ENCODE measurements at regions of chr3 and their contacts with region 1.

Region 1: DNA sequence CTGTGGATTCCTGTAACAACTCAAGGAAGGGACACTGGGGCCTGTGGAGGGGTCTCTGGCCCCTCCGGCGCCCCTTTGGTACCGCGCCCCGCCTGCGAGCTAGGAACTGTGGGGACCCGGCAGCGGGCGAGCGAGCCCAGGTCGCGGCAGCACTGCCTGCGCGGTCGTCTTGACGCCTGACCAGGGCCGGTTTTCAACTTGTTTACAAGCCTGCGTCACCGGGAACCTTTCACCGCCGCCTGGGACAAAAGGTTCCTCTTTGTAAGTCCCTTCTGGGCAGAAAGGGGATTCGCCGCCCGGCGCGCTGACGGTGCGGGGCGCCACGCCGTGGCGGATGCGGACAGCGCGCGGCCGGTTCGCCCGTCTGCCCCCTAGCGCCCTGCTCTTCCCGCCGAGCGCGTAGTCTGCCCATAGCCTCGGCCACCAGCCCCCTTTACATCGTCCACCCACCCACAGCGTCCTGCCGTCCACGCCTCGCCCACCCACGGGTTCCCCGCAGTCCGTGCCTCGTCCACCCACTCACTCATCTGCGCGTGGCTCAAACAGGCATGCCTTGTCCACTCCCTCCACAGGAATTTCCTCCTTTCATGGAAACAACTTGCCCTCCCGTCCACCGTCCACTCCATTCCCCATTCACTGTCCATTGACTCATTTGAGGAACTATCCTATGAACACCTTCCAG is 5.5 kb upstream of the CFAP100 start:
- DNase-seq: peak; percentile 96
- H3K4me3 Mint-ChIP-seq: peak overlapping the region; percentile 71
- H3K27ac Mint-ChIP-seq: peak overlapping the region; percentile 90
- H3K4me1 Mint-ChIP-seq: peaks cover 18% of the 10 kb centered on the region
- H3K27me3 Mint-ChIP-seq: peaks cover 48% of the 10 kb centered on the region
- CTCF ChIP-seq: peak; percentile 98

Region 2: GRCh38 chr3:126259411-126260391 is 129.6 kb before region 1 on chr3:
- CTCF ChIA-PET with region 1: no interaction called
- intact Hi-C with region 1: loop called (anchors 2 kb)
- DNase-seq: peak; percentile 57
- H3K4me3 Mint-ChIP-seq: no peak overlapping the region
- H3K27ac Mint-ChIP-seq: no peak overlapping the region
- H3K4me1 Mint-ChIP-seq: peaks cover 12% of the 10 kb centered on the region
- H3K27me3 Mint-ChIP-seq: peaks cover 14% of the 10 kb centered on the region
- CTCF ChIP-seq: peak; percentile 61

Region 3: DNA sequence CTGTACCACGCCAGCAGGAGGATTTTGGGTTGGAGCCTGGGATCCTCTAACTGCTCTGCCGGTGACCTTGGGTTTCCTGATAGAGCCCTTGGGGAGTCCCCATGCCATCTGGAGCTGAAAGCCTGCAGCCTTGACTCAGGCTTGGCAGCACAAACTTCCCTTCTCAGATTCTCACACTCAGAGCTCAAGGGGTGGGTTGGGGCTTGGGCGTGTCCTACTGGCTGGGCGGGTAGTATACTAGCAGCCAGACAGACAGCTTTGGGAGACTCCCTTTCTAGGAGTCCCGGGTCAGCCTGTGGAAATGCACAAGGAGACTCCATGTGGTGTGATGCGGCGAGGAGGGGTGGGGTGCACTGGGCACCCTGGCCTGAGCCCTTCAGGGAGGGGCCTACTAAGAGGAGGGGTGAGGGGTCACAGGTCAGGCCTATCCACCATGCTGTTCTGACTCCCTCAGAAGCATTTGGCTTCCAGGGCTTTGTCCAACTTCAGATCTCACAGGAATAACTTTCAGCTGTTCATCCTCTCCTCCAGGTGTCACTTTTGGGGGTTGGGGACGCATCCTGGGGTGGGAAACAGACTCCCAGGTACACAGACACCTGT is 572.0 kb after region 1 on chr3:
- CTCF ChIA-PET with region 1: no interaction called
- intact Hi-C with region 1: no loop called
- DNase-seq: no peak
- H3K4me3 Mint-ChIP-seq: no peak overlapping the region
- H3K27ac Mint-ChIP-seq: no peak overlapping the region
- H3K4me1 Mint-ChIP-seq: no peaks in the 10 kb centered on the region
- H3K27me3 Mint-ChIP-seq: no peaks in the 10 kb centered on the region
- CTCF ChIP-seq: no peak

Measured in Calu3 (cell line).